GM12878 (cell line): ENCODE measurements at regions of chr10 and their contacts with region 1.

Region 1: GRCh38 chr10:61140765-61141392 is 196.9 kb upstream of the RHOBTB1 start:
- DNase-seq: no peak
- ATAC-seq: peak; percentile 68
- H3K4me3 ChIP-seq: no peak overlapping the region
- H3K27ac ChIP-seq: no peak overlapping the region
- H3K4me1 ChIP-seq: no peaks in the 10 kb centered on the region
- H3K27me3 ChIP-seq: no peaks in the 10 kb centered on the region
- CTCF ChIP-seq: peak; percentile 56 to 65 (median 58); a peak in 5 of 6 replicates
- EP300 ChIP-seq: no peak
- POLR2A ChIP-seq: no peak
- RAD21 ChIP-seq: peak; percentile 59

Region 2: GRCh38 chr10:60314069-60314940 is 826.6 kb before region 1 on chr10:
- CTCF ChIA-PET with region 1: no interaction called
- POLR2A ChIA-PET with region 1: no interaction called
- RAD21 ChIA-PET with region 1: no interaction called
- SMC1A ChIA-PET with region 1: no interaction called
- in situ Hi-C with region 1: no loop called
- intact Hi-C with region 1: no loop called
- DNase-seq: no peak
- ATAC-seq: no peak
- H3K4me3 ChIP-seq: no peak overlapping the region
- H3K27ac ChIP-seq: no peak overlapping the region
- H3K4me1 ChIP-seq: no peaks in the 10 kb centered on the region
- H3K27me3 ChIP-seq: no peaks in the 10 kb centered on the region; a peak in 1 of 4 replicates
- CTCF ChIP-seq: no peak
- EP300 ChIP-seq: no peak
- POLR2A ChIP-seq: no peak
- RAD21 ChIP-seq: no peak

Region 3: GRCh38 chr10:61151059-61151458 is 10.2 kb after region 1 on chr10:
- CTCF ChIA-PET with region 1: interaction called, 20 read pairs
- POLR2A ChIA-PET with region 1: no interaction called
- RAD21 ChIA-PET with region 1: no interaction called
- SMC1A ChIA-PET with region 1: interaction called, 6 read pairs
- in situ Hi-C with region 1: no loop called
- intact Hi-C with region 1: no loop called
- DNase-seq: no peak
- ATAC-seq: no peak
- H3K4me3 ChIP-seq: no peak overlapping the region
- H3K27ac ChIP-seq: no peak overlapping the region
- H3K4me1 ChIP-seq: no peaks in the 10 kb centered on the region
- H3K27me3 ChIP-seq: no peaks in the 10 kb centered on the region
- CTCF ChIP-seq: no peak
- EP300 ChIP-seq: no peak
- POLR2A ChIP-seq: no peak
- RAD21 ChIP-seq: no peak

Region 4: GRCh38 chr10:61188691-61189090 is 47.8 kb after region 1 on chr10:
- CTCF ChIA-PET with region 1: interaction called, 46 read pairs
- POLR2A ChIA-PET with region 1: no interaction called
- RAD21 ChIA-PET with region 1: interaction called, 10 read pairs
- SMC1A ChIA-PET with region 1: interaction called, 10 read pairs
- in situ Hi-C with region 1: no loop called
- intact Hi-C with region 1: no loop called
- DNase-seq: no peak
- ATAC-seq: no peak
- H3K4me3 ChIP-seq: no peak overlapping the region
- H3K27ac ChIP-seq: no peak overlapping the region
- H3K4me1 ChIP-seq: no peaks in the 10 kb centered on the region
- H3K27me3 ChIP-seq: no peaks in the 10 kb centered on the region
- CTCF ChIP-seq: no peak
- EP300 ChIP-seq: no peak
- POLR2A ChIP-seq: no peak
- RAD21 ChIP-seq: no peak

Region 5: GRCh38 chr10:61284222-61284890 is 143.5 kb after region 1 on chr10:
- CTCF ChIA-PET with region 1: interaction called, 20 read pairs
- POLR2A ChIA-PET with region 1: interaction called, 4 read pairs
- RAD21 ChIA-PET with region 1: interaction called, 9 read pairs
- SMC1A ChIA-PET with region 1: interaction called, 8 read pairs
- in situ Hi-C with region 1: loop called (anchors 5 kb)
- intact Hi-C with region 1: loop called (anchors 2 kb)
- DNase-seq: no peak
- ATAC-seq: no peak
- H3K4me3 ChIP-seq: no peak overlapping the region
- H3K27ac ChIP-seq: no peak overlapping the region
- H3K4me1 ChIP-seq: peaks cover 14% of the 10 kb centered on the region; the same call in 1 of the 2 replicates
- H3K27me3 ChIP-seq: no peaks in the 10 kb centered on the region
- CTCF ChIP-seq: peak; percentile 53 to 62 (median 60); a peak in 5 of 6 replicates
- EP300 ChIP-seq: no peak
- POLR2A ChIP-seq: no peak
- RAD21 ChIP-seq: peak; percentile 59

Region 6: GRCh38 chr10:61592581-61592980 is 451.7 kb after region 1 on chr10:
- CTCF ChIA-PET with region 1: interaction called, 4 read pairs
- POLR2A ChIA-PET with region 1: no interaction called
- RAD21 ChIA-PET with region 1: no interaction called
- SMC1A ChIA-PET with region 1: interaction called, 3 read pairs
- in situ Hi-C with region 1: no loop called
- intact Hi-C with region 1: loop called (anchors 2 kb)
- DNase-seq: no peak
- ATAC-seq: peak; percentile 80
- H3K4me3 ChIP-seq: no peak overlapping the region
- H3K27ac ChIP-seq: no peak overlapping the region
- H3K4me1 ChIP-seq: no peaks in the 10 kb centered on the region
- H3K27me3 ChIP-seq: no peaks in the 10 kb centered on the region; a peak in 1 of 4 replicates
- CTCF ChIP-seq: peak; percentile 46 to 55 (median 51); a peak in 5 of 6 replicates
- EP300 ChIP-seq: no peak
- POLR2A ChIP-seq: no peak
- RAD21 ChIP-seq: peak; percentile 30; the same call in 1 of the 2 replicates

Region 7: GRCh38 chr10:61733358-61733940 is 592.6 kb after region 1 on chr10:
- CTCF ChIA-PET with region 1: interaction called, 24 read pairs
- POLR2A ChIA-PET with region 1: no interaction called
- RAD21 ChIA-PET with region 1: interaction called, 7 read pairs
- SMC1A ChIA-PET with region 1: interaction called, 8 read pairs
- in situ Hi-C with region 1: no loop called
- intact Hi-C with region 1: loop called (anchors 1 kb)
- DNase-seq: no peak
- ATAC-seq: peak; percentile 59
- H3K4me3 ChIP-seq: no peak overlapping the region
- H3K27ac ChIP-seq: no peak overlapping the region
- H3K4me1 ChIP-seq: no peaks in the 10 kb centered on the region
- H3K27me3 ChIP-seq: peaks cover 0 to 4% of the 10 kb centered on the region in 2 experiments; a peak in 1 of 4 replicates
- CTCF ChIP-seq: peak; percentile 38 to 48 (median 44); a peak in 5 of 6 replicates
- EP300 ChIP-seq: no peak
- POLR2A ChIP-seq: no peak
- RAD21 ChIP-seq: peak; percentile 44

Region 8: GRCh38 chr10:61835069-61835945 is 694.4 kb after region 1 on chr10:
- CTCF ChIA-PET with region 1: interaction called, 10 read pairs
- POLR2A ChIA-PET with region 1: no interaction called
- RAD21 ChIA-PET with region 1: interaction called, 3 read pairs
- SMC1A ChIA-PET with region 1: interaction called, 3 read pairs
- in situ Hi-C with region 1: loop called (anchors 25 kb)
- intact Hi-C with region 1: loop called (anchors 5 kb)
- DNase-seq: peak; percentile 7
- ATAC-seq: peak; percentile 76
- H3K4me3 ChIP-seq: no peak overlapping the region
- H3K27ac ChIP-seq: no peak overlapping the region
- H3K4me1 ChIP-seq: no peaks in the 10 kb centered on the region
- H3K27me3 ChIP-seq: no peaks in the 10 kb centered on the region
- CTCF ChIP-seq: peak; percentile 49 to 55 (median 52); a peak in 5 of 6 replicates
- EP300 ChIP-seq: no peak
- POLR2A ChIP-seq: no peak
- RAD21 ChIP-seq: peak; percentile 73